ENCODE measurements at regions of chr1 and their contacts with region 1.

Region 1: DNA sequence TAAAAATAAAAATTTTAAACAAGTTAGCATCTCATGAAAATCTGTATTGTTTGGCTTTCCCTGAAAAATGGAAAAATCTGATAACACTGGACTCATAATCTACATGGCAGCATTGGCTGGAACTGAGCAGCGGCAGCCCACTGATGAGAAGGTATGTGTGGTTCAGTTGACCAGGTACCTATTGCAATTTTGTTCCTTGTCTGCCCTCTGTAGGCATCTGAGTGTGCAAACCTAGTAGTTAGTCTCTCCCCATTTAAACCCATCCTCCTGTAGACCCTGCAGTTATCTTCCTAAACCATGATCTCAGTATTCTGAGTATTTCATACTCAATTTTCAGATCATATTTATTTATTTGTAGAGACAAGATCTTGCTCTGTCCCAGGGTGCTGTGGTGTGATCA is 59.4 kb upstream of the SERBP1 start:
- DNase-seq: no peak
- ATAC-seq: no peak
- H3K4me3 ChIP-seq: no peak overlapping the region
- H3K4me1 ChIP-seq: no peaks in the 10 kb centered on the region
- CTCF ChIP-seq: no peak

Region 2: DNA sequence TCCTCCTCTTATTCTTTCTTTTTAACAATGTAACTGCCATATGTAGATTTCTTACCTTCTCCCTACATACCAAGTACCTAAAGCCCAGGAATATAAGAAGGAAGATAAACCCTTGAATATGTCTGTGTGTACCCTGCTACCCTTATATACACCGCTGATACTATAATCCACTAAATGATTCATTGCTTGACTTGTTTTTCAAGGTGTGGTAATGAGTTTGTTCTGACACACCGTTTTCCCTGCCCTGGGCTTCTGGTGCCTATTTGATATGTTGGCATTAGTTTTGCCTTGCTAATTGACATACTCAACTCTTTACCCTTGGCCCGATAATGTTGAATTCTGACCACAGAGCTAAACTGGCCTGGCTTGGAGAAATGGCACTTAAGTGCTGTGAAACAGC is 259.1 kb before region 1 on chr1:
- intact Hi-C with region 1: loop called in 1 of 2 experiments (anchors 10 kb)
- DNase-seq: no peak
- ATAC-seq: peak; percentile 61
- H3K4me3 ChIP-seq: no peak overlapping the region
- H3K4me1 ChIP-seq: no peaks in the 10 kb centered on the region
- CTCF ChIP-seq: no peak

Measured in mucosa of descending colon (tissue), 3 donors.